Natural killer cell (primary cell): ENCODE measurements at regions of chr17 and their contacts with region 1.

Region 1: GRCh38 chr17:13931800-13932460 is 137.4 kb upstream of the COX10 start:
- DNase-seq: peak; percentile 8 to 41
- ATAC-seq: peak; percentile 76 to 95 (median 93)
- H3K4me3 ChIP-seq: no peak overlapping the region
- H3K4me3 Mint-ChIP-seq: no peak overlapping the region
- H3K27ac ChIP-seq: peak overlapping the region; percentile 87
- H3K27ac Mint-ChIP-seq: peak overlapping the region; percentile 85
- H3K4me1 ChIP-seq: peaks cover 7% of the 10 kb centered on the region
- H3K4me1 Mint-ChIP-seq: peaks cover 19% of the 10 kb centered on the region in 2 donors
- H3K27me3 ChIP-seq: no peaks in the 10 kb centered on the region
- H3K27me3 Mint-ChIP-seq: no peaks in the 10 kb centered on the region
- CTCF ChIP-seq: no peak

Region 2: DNA sequence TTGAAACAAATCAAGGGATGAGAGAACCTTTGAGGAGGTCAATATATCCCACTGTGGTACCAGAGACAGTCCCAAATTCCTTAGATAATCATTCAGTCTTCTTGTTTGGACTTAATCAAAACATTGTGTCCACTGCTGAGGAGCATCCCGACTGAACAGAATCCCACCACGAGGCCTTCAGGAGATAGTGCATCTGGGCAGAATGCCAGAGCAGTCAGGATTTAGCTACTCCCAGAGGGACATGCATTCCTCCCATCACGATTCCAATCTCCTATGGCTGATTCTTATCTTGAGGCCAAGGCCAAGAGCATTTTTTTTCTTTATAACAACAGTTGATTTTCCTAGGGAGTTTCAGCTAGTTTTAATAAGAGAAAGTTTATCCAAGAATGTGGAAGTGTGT is 50.0 kb after region 1 on chr17:
- intact Hi-C with region 1: no loop called
- DNase-seq: no peak
- ATAC-seq: no peak
- H3K4me3 ChIP-seq: no peak overlapping the region
- H3K4me3 Mint-ChIP-seq: no peak overlapping the region
- H3K27ac ChIP-seq: no peak overlapping the region
- H3K27ac Mint-ChIP-seq: no peak overlapping the region
- H3K4me1 ChIP-seq: peaks cover 5% of the 10 kb centered on the region
- H3K4me1 Mint-ChIP-seq: peaks cover 5 to 9% of the 10 kb centered on the region in 2 donors
- H3K27me3 ChIP-seq: no peaks in the 10 kb centered on the region
- H3K27me3 Mint-ChIP-seq: no peaks in the 10 kb centered on the region
- CTCF ChIP-seq: no peak

Region 3: DNA sequence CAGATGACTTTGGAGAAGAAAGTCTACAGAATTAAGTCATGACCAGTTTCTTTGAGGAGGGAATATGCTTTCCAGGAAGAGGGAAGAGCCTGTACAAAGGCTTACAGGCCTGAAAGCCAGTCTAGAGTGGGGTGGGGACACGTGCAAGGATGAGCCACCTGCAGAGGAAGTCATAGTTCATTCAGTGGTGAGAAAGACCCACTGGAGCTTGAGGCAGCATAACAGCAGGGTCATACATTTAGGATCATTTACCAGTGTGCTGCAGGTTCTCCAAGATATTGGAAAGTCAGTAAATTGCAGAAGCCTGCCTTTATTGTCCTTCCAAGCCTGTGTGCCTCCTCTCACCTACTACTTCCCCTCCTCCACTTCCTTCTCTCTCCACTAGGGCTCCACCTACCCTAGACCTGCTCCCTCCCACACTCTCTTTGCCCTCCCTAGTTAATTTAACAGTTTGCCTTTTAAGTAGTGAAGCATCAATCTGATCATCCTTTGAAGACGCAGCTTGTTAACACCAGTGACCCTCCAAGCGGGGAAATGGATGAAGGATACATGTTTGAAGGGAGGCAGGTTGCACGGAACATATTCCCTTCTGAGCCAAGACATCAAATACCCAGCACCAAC is 264.6 kb after region 1 on chr17:
- intact Hi-C with region 1: loop called (anchors 5 kb)
- DNase-seq: peak in 1 of 2 donors; percentile 58
- ATAC-seq: no peak
- H3K4me3 ChIP-seq: no peak overlapping the region
- H3K4me3 Mint-ChIP-seq: peak overlapping the region; percentile 84
- H3K27ac ChIP-seq: peak overlapping the region; percentile 79
- H3K27ac Mint-ChIP-seq: peak overlapping the region; percentile 91 to 92
- H3K4me1 ChIP-seq: peaks cover 80% of the 10 kb centered on the region
- H3K4me1 Mint-ChIP-seq: peaks cover 84 to 88% of the 10 kb centered on the region in 2 donors
- H3K27me3 ChIP-seq: no peaks in the 10 kb centered on the region
- H3K27me3 Mint-ChIP-seq: no peaks in the 10 kb centered on the region
- CTCF ChIP-seq: peak; percentile 11